CD4-positive, alpha-beta memory T cell (primary cell): ENCODE measurements at regions of chr5 and their contacts with region 1.

Region 1: DNA sequence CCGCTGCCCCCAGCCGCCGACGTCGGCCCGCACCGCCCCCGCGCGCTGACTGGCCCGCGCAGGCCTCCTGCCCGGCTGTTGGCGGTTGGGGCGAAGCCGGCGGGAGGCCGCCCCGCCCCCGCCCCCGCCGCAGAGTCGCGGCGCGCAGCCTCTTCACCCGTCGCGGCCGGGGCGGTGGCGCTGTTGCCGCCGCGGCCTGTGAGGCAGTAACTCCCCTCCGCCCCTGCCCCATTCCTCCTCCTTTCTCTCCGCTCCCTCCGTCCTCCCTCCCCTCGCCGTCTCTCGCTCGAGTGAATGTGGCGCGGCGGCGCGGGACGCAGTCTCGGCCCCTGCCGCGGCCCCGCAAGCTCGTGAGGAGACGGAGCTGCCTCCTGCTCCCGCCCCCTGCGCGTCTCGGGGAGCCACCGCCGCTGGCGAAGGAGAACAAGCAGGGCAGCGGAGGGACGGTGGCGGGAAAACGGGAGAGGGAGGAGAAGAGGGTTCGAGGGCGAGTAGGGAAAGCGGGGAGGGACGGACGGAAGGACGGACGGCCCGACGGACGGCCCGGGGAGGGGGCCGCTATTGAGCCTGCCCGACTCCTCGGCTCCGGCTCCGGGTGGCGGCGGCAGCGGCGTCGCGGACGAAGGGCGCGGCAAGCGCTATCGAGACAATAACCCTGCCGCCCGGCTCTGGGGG is 637 bp upstream of the ERBIN start:
- DNase-seq: peak; percentile 83 to 88 (median 84)
- H3K4me3 ChIP-seq: peak overlapping the region in 1 of 2 donors; percentile 80
- H3K4me3 Mint-ChIP-seq: peak overlapping the region; percentile 85 to 98 (median 91)
- H3K27ac ChIP-seq: peak overlapping the region; percentile 95
- H3K27ac Mint-ChIP-seq: peak overlapping the region; percentile 90 to 99 (median 95)
- H3K4me1 ChIP-seq: peaks cover 39% of the 10 kb centered on the region
- H3K4me1 Mint-ChIP-seq: peaks cover 15 to 62% (median 32%) of the 10 kb centered on the region in 4 donors
- H3K27me3 ChIP-seq: no peaks in the 10 kb centered on the region
- H3K27me3 Mint-ChIP-seq: no peaks in the 10 kb centered on the region

Region 2: DNA sequence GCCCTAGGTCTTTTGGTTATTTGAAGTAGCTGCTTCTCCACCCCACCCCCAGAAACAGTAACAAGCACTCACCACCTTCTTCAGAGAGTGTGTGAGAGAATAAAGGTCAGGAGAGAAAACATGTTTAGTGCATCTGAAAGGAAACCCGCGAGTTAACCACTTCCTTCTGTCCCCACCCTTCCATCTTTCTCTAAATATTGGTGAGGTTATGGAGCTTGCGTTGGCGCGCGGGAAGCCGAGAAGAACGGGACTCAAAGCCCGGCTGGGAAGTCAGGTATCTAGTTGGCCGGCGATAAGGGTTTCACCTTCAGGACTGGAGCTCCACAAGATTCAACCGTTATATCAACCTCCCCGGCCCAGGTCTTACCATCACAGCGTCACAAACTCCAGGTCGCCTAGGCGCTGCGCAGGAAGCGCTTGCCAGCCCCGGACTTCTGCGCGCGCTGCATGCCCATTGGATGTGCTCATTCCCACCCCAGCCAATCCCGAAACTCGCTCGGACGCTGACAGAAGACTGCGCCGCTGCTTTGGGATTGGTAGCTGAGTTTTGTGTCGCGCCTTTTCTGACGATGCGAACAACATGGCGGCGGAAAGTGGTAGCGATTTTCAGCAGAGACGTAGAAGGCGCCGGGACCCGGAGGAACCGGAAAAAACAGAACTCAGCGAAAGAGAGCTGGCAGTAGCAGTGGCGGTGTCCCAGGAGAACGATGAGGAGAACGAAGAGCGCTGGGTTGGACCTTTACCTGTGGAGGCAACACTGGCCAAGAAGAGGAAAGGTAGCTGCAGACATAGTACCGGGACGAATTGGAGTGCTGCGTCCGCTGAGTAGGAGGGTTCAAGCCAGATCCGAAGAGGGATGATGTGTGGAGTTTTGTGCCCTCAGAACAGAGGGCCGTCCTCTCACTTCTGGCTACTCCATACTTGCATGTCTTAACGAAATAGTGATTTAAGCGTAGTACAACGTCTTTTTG is 362.7 kb before region 1 on chr5 and contains the starts of genes CENPK and PPWD1:
- CTCF ChIA-PET with region 1: interaction called, 3 read pairs
- POLR2A ChIA-PET with region 1: interaction called, 17 read pairs
- intact Hi-C with region 1: loop called (anchors 5 kb)
- DNase-seq: peak; percentile 93 to 97 (median 96)
- H3K4me3 ChIP-seq: peak within 1 kb of the TSS; percentile 73 to 80
- H3K4me3 Mint-ChIP-seq: peak within 1 kb of the TSS; percentile 98 to 99 (median 98)
- H3K27ac ChIP-seq: peak within 1 kb of the TSS; percentile 92
- H3K27ac Mint-ChIP-seq: peak within 1 kb of the TSS; percentile 96 to 99 (median 99)
- H3K4me1 ChIP-seq: peaks cover 54% of the 10 kb centered on the region
- H3K4me1 Mint-ChIP-seq: peaks cover 32 to 58% (median 41%) of the 10 kb centered on the region in 4 donors
- H3K27me3 ChIP-seq: no peaks in the 10 kb centered on the region
- H3K27me3 Mint-ChIP-seq: no peaks in the 10 kb centered on the region
- total RNA-seq, gene CENPK: 13.6 to 15.4 TPM
- total RNA-seq, gene PPWD1: 102 to 104 TPM

Region 3: DNA sequence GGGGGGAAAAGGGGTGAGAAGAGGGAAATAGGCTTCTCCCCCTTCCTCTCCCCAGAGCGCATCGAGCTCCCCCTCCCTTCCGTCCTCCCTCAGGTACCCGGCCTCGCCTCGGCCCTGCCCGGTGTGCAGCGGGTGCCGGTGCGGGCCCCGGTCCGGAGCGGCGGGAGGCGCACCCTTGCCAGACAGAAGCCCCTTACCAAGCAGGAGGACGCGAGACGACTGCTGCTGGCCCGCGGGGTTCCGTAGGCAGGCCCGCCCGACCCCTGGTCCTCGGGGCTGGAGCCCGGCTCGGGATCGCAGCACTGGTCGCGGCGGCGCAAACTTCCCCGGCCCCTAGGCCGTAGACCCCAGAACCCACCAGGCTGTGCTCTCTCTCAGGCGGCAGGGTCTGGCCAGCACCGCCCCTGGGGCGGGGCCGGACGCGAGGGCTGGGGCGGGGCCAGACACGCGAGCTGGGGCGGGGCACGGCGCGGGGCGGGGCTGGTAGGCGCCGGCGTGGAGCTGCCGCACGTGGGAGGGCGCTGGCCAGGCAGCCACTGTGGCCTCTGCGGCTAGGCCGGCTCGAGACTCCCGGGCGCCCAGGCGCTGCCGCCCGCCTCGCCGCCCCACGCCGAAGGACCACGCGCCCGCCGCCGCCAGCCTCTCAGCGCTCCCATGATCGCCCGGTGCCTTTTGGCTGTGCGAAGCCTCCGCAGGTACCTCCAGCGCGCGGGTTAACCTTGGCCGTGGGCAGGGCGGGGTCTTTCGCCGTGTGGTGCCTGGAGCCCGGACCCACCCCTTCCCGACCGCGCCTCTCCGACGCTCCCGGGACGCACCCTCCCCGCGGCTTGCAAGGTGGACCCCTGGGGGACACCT is 203.8 kb before region 1 on chr5 and contains the starts of genes NLN and SGTB:
- CTCF ChIA-PET with region 1: no interaction called
- POLR2A ChIA-PET with region 1: interaction called, 52 read pairs
- intact Hi-C with region 1: loop called (anchors 2 kb)
- DNase-seq: peak; percentile 78 to 86 (median 82)
- H3K4me3 ChIP-seq: peak within 1 kb of the TSS; percentile 57 to 64
- H3K4me3 Mint-ChIP-seq: peak within 1 kb of the TSS; percentile 88 to 98 (median 94)
- H3K27ac ChIP-seq: peak within 1 kb of the TSS; percentile 91
- H3K27ac Mint-ChIP-seq: peak within 1 kb of the TSS in 6 of 7 donors; percentile 75 to 93 (median 90)
- H3K4me1 ChIP-seq: peaks cover 46% of the 10 kb centered on the region
- H3K4me1 Mint-ChIP-seq: peaks cover 9 to 22% (median 14%) of the 10 kb centered on the region in 4 donors
- H3K27me3 ChIP-seq: no peaks in the 10 kb centered on the region
- H3K27me3 Mint-ChIP-seq: no peaks in the 10 kb centered on the region
- total RNA-seq, gene NLN: 2.3 to 2.4 TPM
- total RNA-seq, gene SGTB: 42.6 to 46.5 TPM

Region 4: GRCh38 chr5:65809817-65810531 is 115.8 kb before region 1 on chr5:
- CTCF ChIA-PET with region 1: no interaction called
- POLR2A ChIA-PET with region 1: no interaction called
- intact Hi-C with region 1: no loop called
- DNase-seq: no peak
- H3K4me3 ChIP-seq: no peak overlapping the region
- H3K4me3 Mint-ChIP-seq: no peak overlapping the region
- H3K27ac ChIP-seq: no peak overlapping the region
- H3K27ac Mint-ChIP-seq: no peak overlapping the region
- H3K4me1 ChIP-seq: peaks cover 11% of the 10 kb centered on the region
- H3K4me1 Mint-ChIP-seq: peaks cover 6 to 15% (median 12%) of the 10 kb centered on the region in 4 donors
- H3K27me3 ChIP-seq: no peaks in the 10 kb centered on the region
- H3K27me3 Mint-ChIP-seq: no peaks in the 10 kb centered on the region

Region 5: DNA sequence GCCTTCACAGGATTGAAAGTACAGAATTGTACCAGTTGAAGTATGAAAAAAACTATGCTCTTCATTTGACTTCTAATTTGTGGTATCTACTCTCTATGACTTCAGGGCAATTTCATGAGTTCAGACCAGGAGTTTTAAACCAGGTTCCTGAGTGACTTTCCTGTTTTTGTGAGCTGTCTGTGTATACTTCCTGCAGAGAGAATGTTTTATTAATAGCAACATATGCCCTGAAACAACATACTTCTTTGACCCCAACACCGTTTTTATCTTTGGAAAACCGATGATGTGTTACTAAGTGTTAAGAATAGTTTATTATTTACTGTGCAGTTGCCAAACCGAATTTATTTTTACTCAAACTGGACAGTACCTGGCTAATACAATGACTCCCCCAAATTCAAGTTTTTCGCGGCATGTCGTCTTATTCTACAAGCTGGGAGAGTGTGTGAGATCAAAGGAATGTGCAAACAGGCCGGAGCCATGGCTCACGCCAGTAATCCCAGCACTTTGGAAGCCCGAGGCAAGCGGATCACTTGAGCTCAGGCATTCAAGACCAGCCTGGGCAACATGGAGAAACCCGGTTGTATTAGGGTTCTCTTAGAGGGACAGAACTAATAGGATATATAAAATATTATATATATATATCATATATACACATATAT is 58.1 kb before region 1 on chr5:
- CTCF ChIA-PET with region 1: no interaction called
- POLR2A ChIA-PET with region 1: interaction called, 17 read pairs
- intact Hi-C with region 1: loop called (anchors 1 kb)
- DNase-seq: peak in 1 of 5 donors; percentile 5
- H3K4me3 ChIP-seq: no peak overlapping the region
- H3K4me3 Mint-ChIP-seq: peak overlapping the region; percentile 55 to 82 (median 73)
- H3K27ac ChIP-seq: peak overlapping the region; percentile 11
- H3K27ac Mint-ChIP-seq: peak overlapping the region; percentile 69 to 92 (median 84)
- H3K4me1 ChIP-seq: peaks cover 21% of the 10 kb centered on the region
- H3K4me1 Mint-ChIP-seq: peaks cover 18 to 25% (median 23%) of the 10 kb centered on the region in 4 donors
- H3K27me3 ChIP-seq: no peaks in the 10 kb centered on the region
- H3K27me3 Mint-ChIP-seq: no peaks in the 10 kb centered on the region

Region 6: DNA sequence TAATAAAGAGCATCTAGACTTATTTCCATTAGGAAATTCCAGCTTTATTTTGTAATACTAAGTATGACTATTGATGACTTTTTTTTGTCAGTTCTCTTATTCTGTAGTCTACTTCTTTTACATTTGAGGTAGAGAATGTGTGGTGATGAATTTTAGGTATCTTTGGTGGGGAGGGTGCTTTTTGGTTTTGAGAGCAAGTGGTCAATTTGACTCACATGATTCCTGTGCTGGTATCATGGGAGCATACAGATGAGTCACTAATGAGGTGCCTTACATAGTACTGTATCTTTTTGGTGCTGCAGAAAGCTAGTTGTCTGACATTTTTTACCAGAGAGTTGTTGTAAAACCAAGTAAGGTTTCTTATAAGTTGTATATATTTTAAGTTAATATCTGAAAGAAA is 35.9 kb after region 1 on chr5:
- CTCF ChIA-PET with region 1: no interaction called
- POLR2A ChIA-PET with region 1: interaction called, 4 read pairs
- intact Hi-C with region 1: loop called (anchors 5 kb)
- DNase-seq: no peak
- H3K4me3 ChIP-seq: no peak overlapping the region
- H3K4me3 Mint-ChIP-seq: peak overlapping the region in 6 of 8 donors; percentile 5 to 55 (median 12)
- H3K27ac ChIP-seq: no peak overlapping the region
- H3K27ac Mint-ChIP-seq: peak overlapping the region in 4 of 7 donors; percentile 11 to 42 (median 27)
- H3K4me1 ChIP-seq: peaks cover 47% of the 10 kb centered on the region
- H3K4me1 Mint-ChIP-seq: peaks cover 25 to 69% (median 55%) of the 10 kb centered on the region in 4 donors
- H3K27me3 ChIP-seq: no peaks in the 10 kb centered on the region
- H3K27me3 Mint-ChIP-seq: no peaks in the 10 kb centered on the region

Region 7: DNA sequence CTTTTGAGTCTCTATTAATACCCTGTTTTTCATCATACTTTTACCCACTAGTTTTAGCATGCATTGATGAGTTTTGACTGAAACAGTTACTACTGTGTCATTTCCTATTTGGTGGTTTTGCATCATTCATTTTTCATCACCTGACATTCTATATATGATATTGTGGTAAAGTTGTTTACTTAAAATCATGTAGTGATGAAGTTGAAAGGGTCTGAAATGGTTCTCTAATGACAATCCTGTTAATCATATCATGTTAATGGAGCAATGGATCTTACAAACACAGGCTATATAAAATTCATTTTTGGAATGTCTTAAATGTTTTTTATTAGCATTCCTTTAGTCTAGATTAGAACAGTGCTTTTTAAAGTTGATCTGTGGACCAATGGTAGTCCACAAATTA is 84.7 kb after region 1 on chr5:
- CTCF ChIA-PET with region 1: no interaction called
- POLR2A ChIA-PET with region 1: interaction called, 6 read pairs
- intact Hi-C with region 1: loop called (anchors 2 kb)
- DNase-seq: peak in 4 of 5 donors; percentile 17 to 44 (median 32)
- H3K4me3 ChIP-seq: no peak overlapping the region
- H3K4me3 Mint-ChIP-seq: peak overlapping the region in 4 of 8 donors; percentile 7 to 70 (median 40)
- H3K27ac ChIP-seq: no peak overlapping the region
- H3K27ac Mint-ChIP-seq: peak overlapping the region; percentile 75 to 89 (median 86)
- H3K4me1 ChIP-seq: peaks cover 38% of the 10 kb centered on the region
- H3K4me1 Mint-ChIP-seq: peaks cover 19 to 54% (median 45%) of the 10 kb centered on the region in 4 donors
- H3K27me3 ChIP-seq: no peaks in the 10 kb centered on the region
- H3K27me3 Mint-ChIP-seq: no peaks in the 10 kb centered on the region

Region 8: GRCh38 chr5:66039296-66039695 is 113.6 kb after region 1 on chr5:
- CTCF ChIA-PET with region 1: no interaction called
- POLR2A ChIA-PET with region 1: no interaction called
- intact Hi-C with region 1: no loop called
- DNase-seq: no peak
- H3K4me3 ChIP-seq: no peak overlapping the region
- H3K4me3 Mint-ChIP-seq: no peak overlapping the region
- H3K27ac ChIP-seq: no peak overlapping the region
- H3K27ac Mint-ChIP-seq: no peak overlapping the region
- H3K4me1 ChIP-seq: no peaks in the 10 kb centered on the region
- H3K4me1 Mint-ChIP-seq: peaks cover 11 to 30% (median 22%) of the 10 kb centered on the region in 4 donors
- H3K27me3 ChIP-seq: no peaks in the 10 kb centered on the region
- H3K27me3 Mint-ChIP-seq: peaks cover 0 to 2% of the 10 kb centered on the region in 2 donors

Region 9: GRCh38 chr5:66144074-66144833 is 218.5 kb after region 1 on chr5 and contains the start of gene SREK1:
- CTCF ChIA-PET with region 1: interaction called, 3 read pairs
- POLR2A ChIA-PET with region 1: interaction called, 31 read pairs
- intact Hi-C with region 1: loop called (anchors 1 kb)
- DNase-seq: peak; percentile 88 to 90 (median 89)
- H3K4me3 ChIP-seq: peak within 1 kb of the TSS; percentile 94 to 96
- H3K4me3 Mint-ChIP-seq: peak within 1 kb of the TSS; percentile 98 to 100 (median 99)
- H3K27ac ChIP-seq: peak within 1 kb of the TSS; percentile 99
- H3K27ac Mint-ChIP-seq: peak within 1 kb of the TSS; percentile 100
- H3K4me1 ChIP-seq: peaks cover 48% of the 10 kb centered on the region
- H3K4me1 Mint-ChIP-seq: peaks cover 23 to 47% (median 31%) of the 10 kb centered on the region in 4 donors
- H3K27me3 ChIP-seq: no peaks in the 10 kb centered on the region
- H3K27me3 Mint-ChIP-seq: peaks cover 0 to 2% of the 10 kb centered on the region in 2 donors
- total RNA-seq, gene SREK1: 71.0 to 73.7 TPM